ENCODE measurements at regions of chr18 and their contacts with region 1.

Region 1: GRCh38 chr18:3585656-3586509 is 135.9 kb downstream of the TGIF1 start:
- DNase-seq: peak; percentile 88
- ATAC-seq: peak; percentile 72
- H3K4me3 Mint-ChIP-seq: no peak overlapping the region
- H3K27ac Mint-ChIP-seq: peak overlapping the region; percentile 59
- H3K4me1 Mint-ChIP-seq: peaks cover 46% of the 10 kb centered on the region
- H3K27me3 Mint-ChIP-seq: no peaks in the 10 kb centered on the region

Region 2: DNA sequence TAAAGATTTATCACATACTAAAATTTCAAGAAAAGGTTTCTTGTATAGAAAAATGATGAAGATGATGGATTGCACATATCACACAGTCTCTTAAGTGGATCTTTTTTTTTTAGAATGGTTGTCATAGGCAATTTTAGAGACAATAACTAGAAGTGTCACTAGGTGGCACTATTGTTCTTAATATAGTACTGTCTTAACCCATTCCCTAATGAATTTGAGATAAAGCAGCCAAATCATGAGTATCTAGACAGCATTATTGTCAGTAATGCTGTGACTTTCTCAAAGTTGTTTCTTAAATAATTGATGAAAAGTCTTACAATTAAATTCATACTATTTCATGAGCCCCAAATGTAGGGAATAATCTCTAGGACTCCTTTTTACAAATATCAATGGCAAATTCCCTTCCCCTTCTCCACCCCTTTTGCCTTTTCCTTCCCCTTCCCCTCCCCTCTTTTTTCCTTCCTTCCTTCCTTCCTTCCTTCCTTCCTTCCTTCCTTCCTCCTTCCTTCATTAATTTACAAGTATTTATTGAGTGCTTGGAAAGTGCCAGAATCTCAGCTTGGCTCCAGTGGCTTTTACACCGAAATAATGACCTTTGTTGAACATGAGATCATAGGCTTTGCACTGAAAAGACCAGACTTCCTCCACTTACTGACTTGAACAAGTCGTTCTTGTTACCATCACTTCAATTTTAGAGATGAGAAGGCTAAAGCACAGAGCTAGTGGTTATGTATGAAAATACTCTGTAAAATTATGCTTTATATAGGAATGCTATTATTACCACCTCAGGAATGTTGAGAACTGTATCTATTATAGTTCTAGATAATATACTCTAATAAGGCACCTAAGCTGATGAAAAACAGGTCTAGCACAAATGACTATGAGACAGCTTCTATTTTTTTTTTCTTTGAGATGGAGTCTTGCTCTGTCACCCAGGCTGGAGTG is 304.2 kb before region 1 on chr18:
- CTCF ChIA-PET with region 1: interaction called, 4 read pairs
- POLR2A ChIA-PET with region 1: no interaction called
- intact Hi-C with region 1: loop called (anchors 2 kb)
- DNase-seq: no peak
- ATAC-seq: peak; percentile 90
- H3K4me3 Mint-ChIP-seq: no peak overlapping the region
- H3K27ac Mint-ChIP-seq: no peak overlapping the region
- H3K4me1 Mint-ChIP-seq: peaks cover 10% of the 10 kb centered on the region
- H3K27me3 Mint-ChIP-seq: no peaks in the 10 kb centered on the region

Region 3: GRCh38 chr18:3297025-3297984 is 288.6 kb before region 1 on chr18:
- CTCF ChIA-PET with region 1: interaction called, 13 read pairs
- POLR2A ChIA-PET with region 1: no interaction called
- intact Hi-C with region 1: loop called in 1 of 2 experiments (anchors 5 kb)
- DNase-seq: peak; percentile 97
- ATAC-seq: peak; percentile 97
- H3K4me3 Mint-ChIP-seq: peak overlapping the region; percentile 87
- H3K27ac Mint-ChIP-seq: peak overlapping the region; percentile 78
- H3K4me1 Mint-ChIP-seq: peaks cover 2% of the 10 kb centered on the region
- H3K27me3 Mint-ChIP-seq: peaks cover 22% of the 10 kb centered on the region

Region 4: DNA sequence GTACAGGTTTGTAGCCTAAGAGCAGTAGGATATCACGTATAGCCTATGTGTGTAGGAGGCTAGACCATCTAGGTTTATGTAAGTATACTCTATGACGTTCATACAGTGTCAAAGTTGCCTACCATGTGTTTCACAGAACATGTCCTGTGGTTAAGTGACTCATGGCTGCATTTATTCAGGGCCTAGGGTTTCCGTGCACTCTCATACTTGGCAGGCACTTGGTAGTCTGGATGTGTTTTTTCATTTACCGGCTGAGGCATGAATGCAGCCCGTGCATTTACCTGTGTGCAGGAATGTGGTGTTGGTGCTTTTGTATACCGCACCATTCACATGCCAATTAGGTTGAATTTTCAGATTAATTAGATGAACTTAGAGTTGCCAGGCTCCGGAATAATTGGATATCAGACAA is 280.5 kb before region 1 on chr18:
- CTCF ChIA-PET with region 1: no interaction called
- POLR2A ChIA-PET with region 1: no interaction called
- intact Hi-C with region 1: loop called in 1 of 2 experiments (anchors 2 kb)
- DNase-seq: peak; percentile 72
- ATAC-seq: peak; percentile 98
- H3K4me3 Mint-ChIP-seq: peak overlapping the region; percentile 20
- H3K27ac Mint-ChIP-seq: peak overlapping the region; percentile 89
- H3K4me1 Mint-ChIP-seq: peaks cover 20% of the 10 kb centered on the region
- H3K27me3 Mint-ChIP-seq: peaks cover 16% of the 10 kb centered on the region

Region 5: GRCh38 chr18:3380384-3380961 is 205.4 kb before region 1 on chr18:
- CTCF ChIA-PET with region 1: interaction called, 9 read pairs
- POLR2A ChIA-PET with region 1: no interaction called
- intact Hi-C with region 1: loop called in 1 of 2 experiments (anchors 2 kb)
- DNase-seq: peak; percentile 49
- ATAC-seq: peak; percentile 97
- H3K4me3 Mint-ChIP-seq: no peak overlapping the region
- H3K27ac Mint-ChIP-seq: no peak overlapping the region
- H3K4me1 Mint-ChIP-seq: peaks cover 10% of the 10 kb centered on the region
- H3K27me3 Mint-ChIP-seq: peaks cover 10% of the 10 kb centered on the region

Region 6: DNA sequence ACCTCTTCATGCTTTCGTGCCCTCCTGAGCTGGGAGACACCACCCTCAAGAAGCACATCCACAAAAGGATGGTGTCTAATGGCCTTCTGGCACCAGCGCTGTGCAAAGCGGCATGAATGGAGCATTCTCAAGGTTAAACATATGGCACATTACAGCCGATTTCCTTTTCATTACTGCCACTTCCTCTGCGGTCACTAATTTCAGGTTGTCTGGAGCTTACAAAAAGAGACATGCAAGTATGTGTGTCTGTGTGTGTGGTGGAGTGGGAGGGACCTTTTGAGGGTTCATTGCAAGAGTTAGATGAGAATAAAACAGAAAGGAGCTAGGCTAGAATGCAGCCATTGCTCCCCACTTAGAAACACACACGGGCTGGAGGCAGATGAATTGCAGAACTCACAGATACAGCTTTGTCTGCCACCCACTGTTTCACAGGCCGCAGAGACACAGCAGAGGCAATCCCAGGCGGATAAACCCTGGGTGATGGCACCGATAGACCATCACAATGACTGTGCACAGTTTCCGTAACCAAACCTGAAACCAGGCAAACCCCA is 59.9 kb before region 1 on chr18:
- CTCF ChIA-PET with region 1: interaction called, 5 read pairs
- POLR2A ChIA-PET with region 1: no interaction called
- intact Hi-C with region 1: loop called in 1 of 2 experiments (anchors 5 kb)
- DNase-seq: peak; percentile 69
- ATAC-seq: peak; percentile 91
- H3K4me3 Mint-ChIP-seq: peak overlapping the region; percentile 6
- H3K27ac Mint-ChIP-seq: peak overlapping the region; percentile 12
- H3K4me1 Mint-ChIP-seq: peaks cover 16% of the 10 kb centered on the region
- H3K27me3 Mint-ChIP-seq: peaks cover under 1% of the 10 kb centered on the region

Region 7: GRCh38 chr18:3541549-3542386 is 44.1 kb before region 1 on chr18:
- CTCF ChIA-PET with region 1: interaction called, 8 read pairs
- POLR2A ChIA-PET with region 1: no interaction called
- intact Hi-C with region 1: loop called (anchors 1 to 2 kb)
- DNase-seq: peak; percentile 65
- ATAC-seq: peak; percentile 96
- H3K4me3 Mint-ChIP-seq: peak overlapping the region; percentile 16
- H3K27ac Mint-ChIP-seq: peak overlapping the region; percentile 74
- H3K4me1 Mint-ChIP-seq: peaks cover 32% of the 10 kb centered on the region
- H3K27me3 Mint-ChIP-seq: peaks cover 2% of the 10 kb centered on the region

Region 8: GRCh38 chr18:4125232-4126230 is 539.6 kb after region 1 on chr18:
- CTCF ChIA-PET with region 1: no interaction called
- POLR2A ChIA-PET with region 1: no interaction called
- intact Hi-C with region 1: no loop called
- DNase-seq: no peak
- ATAC-seq: no peak
- H3K4me3 Mint-ChIP-seq: no peak overlapping the region
- H3K27ac Mint-ChIP-seq: no peak overlapping the region
- H3K4me1 Mint-ChIP-seq: no peaks in the 10 kb centered on the region
- H3K27me3 Mint-ChIP-seq: peaks cover 8% of the 10 kb centered on the region